Gastrocnemius medialis (tissue), 4 donors: ENCODE measurements at regions of chr17 and their contacts with region 1.

Region 1: GRCh38 chr17:3378321-3378720 is 7.8 kb downstream of the OR3A2 start:
- DNase-seq: no peak
- ATAC-seq: no peak
- H3K4me3 ChIP-seq: no peak overlapping the region
- H3K27ac ChIP-seq: no peak overlapping the region
- H3K4me1 ChIP-seq: no peaks in the 10 kb centered on the region
- H3K27me3 ChIP-seq: no peaks in the 10 kb centered on the region
- CTCF ChIP-seq: no peak
- POLR2A ChIP-seq: no peak

Region 2: GRCh38 chr17:3474212-3474611 is 95.9 kb after region 1 on chr17:
- in situ Hi-C with region 1: loop called in 1 of 4 experiments (anchors 25 kb)
- intact Hi-C with region 1: no loop called
- DNase-seq: no peak
- ATAC-seq: no peak
- H3K4me3 ChIP-seq: no peak overlapping the region
- H3K27ac ChIP-seq: peak overlapping the region in 2 of 4 donors; percentile 35 to 72
- H3K4me1 ChIP-seq: peaks cover 4 to 7% of the 10 kb centered on the region in 2 donors
- H3K27me3 ChIP-seq: no peaks in the 10 kb centered on the region
- CTCF ChIP-seq: no peak
- POLR2A ChIP-seq: no peak